Left ventricle myocardium superior (tissue), 1 donor: ENCODE measurements at regions of chr1 and their contacts with region 1.

Region 1: DNA sequence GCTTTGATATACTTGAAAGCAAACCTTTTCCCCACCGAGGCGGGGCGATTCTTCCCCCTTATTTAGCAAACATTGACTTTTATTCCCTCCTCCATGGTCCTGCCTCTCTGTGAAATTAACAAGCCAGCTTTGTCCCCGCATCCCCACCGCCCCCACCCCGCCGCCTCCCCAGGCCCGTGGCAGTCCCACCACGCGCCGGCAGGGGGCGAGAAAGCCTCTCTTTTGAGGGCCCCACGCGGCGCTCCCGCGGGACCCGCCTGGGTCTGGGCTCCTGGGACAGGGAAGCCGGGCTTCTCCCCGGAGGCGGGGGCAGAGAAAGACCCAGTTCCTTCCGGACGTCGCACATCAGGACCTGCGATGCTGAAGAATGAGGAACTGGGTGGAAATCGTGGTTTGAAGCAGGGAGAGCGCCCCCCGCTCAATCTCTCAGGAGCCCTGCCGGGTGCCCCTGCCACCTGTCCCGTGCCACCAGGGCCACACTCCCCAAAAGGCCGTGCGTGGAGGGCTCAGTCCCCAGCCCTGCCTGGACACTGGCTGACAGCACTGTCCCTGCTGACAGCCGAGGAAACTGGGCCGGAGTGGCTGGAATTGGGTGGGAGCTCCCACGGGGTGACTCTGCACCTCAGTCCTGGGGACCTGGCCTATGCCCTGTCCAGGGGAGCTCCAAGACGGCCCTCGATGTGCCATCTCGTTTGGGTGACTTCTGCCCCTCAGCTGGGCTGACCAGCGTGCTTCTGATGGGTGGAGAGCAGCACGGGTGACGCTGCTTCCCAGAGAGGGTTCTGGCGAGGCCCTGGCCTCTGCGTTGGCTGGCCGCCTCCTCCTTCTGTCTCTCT is 8.6 kb upstream of the ACTRT2 start:
- DNase-seq: peak; percentile 81
- ATAC-seq: peak; percentile 91

Region 2: DNA sequence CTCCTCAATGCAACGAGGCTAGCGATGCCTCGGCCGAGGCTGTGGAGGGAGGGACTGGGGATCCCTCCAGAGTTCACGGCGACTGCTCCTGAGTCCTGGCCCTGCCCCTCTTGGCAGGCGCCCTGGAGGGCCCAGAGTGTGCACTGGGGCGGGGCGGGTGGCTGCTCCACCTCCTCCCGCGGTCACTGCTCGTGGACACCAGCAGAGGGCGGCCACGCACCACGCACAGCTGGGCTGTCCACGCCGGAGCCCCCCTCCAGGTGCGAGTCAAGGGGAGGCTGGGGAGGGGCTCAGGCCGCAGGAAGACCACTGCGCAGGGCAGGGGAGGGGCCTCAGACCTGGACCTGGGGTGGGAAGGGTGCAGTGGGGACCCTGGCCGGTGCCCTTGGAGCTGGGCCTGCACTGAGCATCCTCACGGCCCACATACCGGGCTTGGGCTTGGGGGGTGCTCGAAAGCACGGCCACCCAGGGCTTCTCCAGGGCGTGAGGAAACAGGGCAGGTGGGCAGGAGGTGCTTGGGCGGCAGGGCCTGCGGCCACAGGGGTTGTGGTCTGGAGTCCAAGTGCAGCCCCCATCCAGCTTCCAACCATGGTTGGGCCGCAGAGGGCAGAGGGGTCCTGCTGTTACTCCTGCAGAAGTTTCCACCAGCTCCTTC is 190.6 kb before region 1 on chr1:
- intact Hi-C with region 1: no loop called
- DNase-seq: peak; percentile 69
- ATAC-seq: peak; percentile 92

Region 3: DNA sequence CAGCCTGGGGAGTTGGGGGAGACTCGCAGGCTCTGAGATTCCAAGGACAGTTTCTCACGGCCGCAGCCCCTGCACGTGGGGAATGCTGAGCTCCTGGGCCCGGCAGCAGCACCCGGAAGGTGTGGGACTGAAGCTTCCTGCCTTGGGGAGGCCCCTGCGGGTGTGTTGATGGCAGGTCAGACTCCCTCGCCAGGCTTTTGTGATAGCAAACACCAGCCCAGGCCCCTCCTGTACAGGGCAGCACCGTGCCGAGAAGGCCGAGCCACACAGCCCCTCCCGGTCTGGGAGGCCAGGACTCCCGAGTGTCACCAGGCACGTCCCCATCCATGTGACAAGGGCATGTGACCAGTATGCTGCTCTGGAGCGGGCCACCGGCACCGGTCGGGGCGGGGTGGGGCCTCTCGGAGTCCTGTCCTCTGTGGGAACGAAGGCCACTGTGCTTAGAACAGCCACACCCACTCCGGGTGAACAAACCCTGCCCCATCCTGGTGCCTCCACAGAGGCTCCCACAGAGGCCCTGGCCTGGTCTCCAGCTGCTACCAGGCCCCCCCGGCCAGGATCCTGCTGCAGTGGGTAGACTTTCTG is 410.7 kb after region 1 on chr1:
- intact Hi-C with region 1: loop called (anchors 10 kb)
- DNase-seq: peak; percentile 92
- ATAC-seq: peak; percentile 94